Sciatic nerve (tissue), 2 donors: ENCODE measurements at regions of chr10 and their contacts with region 1.

Region 1: DNA sequence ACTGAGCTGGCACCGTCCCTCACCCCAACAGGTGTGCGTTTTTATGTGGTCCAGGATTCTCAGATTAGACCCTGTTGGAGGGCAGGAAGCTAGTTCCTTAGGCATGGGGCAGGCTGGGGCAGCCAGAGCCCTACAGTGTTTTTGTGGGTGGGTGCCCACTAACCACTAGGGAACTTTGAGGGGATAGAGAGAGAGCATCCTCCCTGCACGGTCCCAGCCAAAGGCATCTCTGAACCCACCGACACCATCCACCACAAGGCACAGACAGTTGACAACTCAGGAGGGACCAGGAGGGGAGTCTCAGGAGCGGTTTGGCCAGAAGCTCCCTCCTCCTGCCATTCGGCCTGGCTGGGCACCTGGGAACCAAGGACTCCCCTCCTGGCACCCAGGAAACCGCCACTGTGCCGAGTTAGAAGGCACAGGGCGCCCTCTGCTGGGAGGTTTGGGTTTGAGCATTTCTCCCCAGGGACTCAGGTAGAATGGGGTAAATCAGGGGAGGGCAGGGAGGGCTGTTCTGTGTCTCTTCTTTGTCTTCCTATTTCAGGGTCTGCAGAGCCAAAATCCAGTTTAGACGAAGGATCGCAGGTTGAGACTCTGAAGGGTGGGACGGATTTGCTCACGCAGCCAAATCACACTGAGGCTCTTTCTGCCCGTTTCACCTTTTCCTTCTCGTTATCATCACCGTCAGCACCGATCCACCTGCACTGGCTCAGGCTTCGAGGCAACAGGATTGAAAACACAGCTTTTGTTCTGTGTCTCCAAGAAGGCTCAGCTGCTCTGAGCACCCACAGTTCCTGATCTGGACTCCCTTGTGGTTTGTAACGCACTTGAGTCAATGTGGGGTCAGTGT is 84.8 kb upstream of the COL13A1 start:
- DNase-seq: no peak
- ATAC-seq: no peak

Region 2: GRCh38 chr10:69649786-69650555 is 67.0 kb before region 1 on chr10:
- intact Hi-C with region 1: loop called (anchors 2 kb)
- DNase-seq: no peak
- ATAC-seq: no peak